ENCODE measurements at regions of chr20 and their contacts with region 1.

Region 1: GRCh38 chr20:609371-609964 is 641 bp downstream of the TCF15 start:
- DNase-seq: no peak
- H3K4me3 ChIP-seq: no peak overlapping the region
- H3K27ac ChIP-seq: no peak overlapping the region
- H3K4me1 ChIP-seq: no peaks in the 10 kb centered on the region
- H3K27me3 ChIP-seq: no peaks in the 10 kb centered on the region
- CTCF ChIP-seq: no peak
- EP300 ChIP-seq: no peak
- POLR2A ChIP-seq: no peak

Region 2: GRCh38 chr20:740141-740540 is 130.7 kb after region 1 on chr20:
- intact Hi-C with region 1: loop called in 1 of 4 experiments (anchors 5 kb)
- DNase-seq: no peak
- H3K4me3 ChIP-seq: no peak overlapping the region
- H3K27ac ChIP-seq: no peak overlapping the region
- H3K4me1 ChIP-seq: no peaks in the 10 kb centered on the region
- H3K27me3 ChIP-seq: no peaks in the 10 kb centered on the region
- CTCF ChIP-seq: no peak
- EP300 ChIP-seq: no peak
- POLR2A ChIP-seq: no peak

Measured in ovary (tissue), 10 donors.